ENCODE measurements at regions of chr22 and their contacts with region 1.

Region 1: DNA sequence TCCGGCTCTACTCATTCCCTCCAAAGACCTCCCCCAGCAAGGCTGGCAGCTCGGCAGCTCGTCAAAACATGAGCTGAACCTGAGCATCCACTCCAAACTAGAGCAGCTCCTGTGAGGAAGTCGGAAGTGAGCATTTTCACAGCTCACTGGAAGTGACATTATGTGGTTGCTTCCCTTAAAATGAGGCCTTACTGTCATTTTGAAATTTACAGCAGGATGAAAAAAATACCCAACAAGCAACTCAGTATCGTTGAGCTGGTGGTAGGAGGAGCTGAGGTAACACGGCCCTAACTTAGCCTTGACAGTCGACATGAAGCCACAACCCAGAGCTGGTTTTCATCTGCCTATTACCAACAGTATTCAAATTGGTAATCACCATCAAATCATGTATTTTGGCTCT is 38.0 kb upstream of the ARFGAP3 start:
- DNase-seq: peak; percentile 73
- H3K4me3 Mint-ChIP-seq: peak overlapping the region; percentile 16
- H3K27ac Mint-ChIP-seq: peak overlapping the region; percentile 78
- H3K4me1 Mint-ChIP-seq: peaks cover 34% of the 10 kb centered on the region
- H3K27me3 Mint-ChIP-seq: no peaks in the 10 kb centered on the region

Region 2: GRCh38 chr22:42399315-42400271 is 495.5 kb before region 1 on chr22:
- intact Hi-C with region 1: no loop called
- DNase-seq: no peak
- H3K4me3 Mint-ChIP-seq: no peak overlapping the region
- H3K27ac Mint-ChIP-seq: no peak overlapping the region
- H3K4me1 Mint-ChIP-seq: peaks cover 4% of the 10 kb centered on the region
- H3K27me3 Mint-ChIP-seq: no peaks in the 10 kb centered on the region

Region 3: DNA sequence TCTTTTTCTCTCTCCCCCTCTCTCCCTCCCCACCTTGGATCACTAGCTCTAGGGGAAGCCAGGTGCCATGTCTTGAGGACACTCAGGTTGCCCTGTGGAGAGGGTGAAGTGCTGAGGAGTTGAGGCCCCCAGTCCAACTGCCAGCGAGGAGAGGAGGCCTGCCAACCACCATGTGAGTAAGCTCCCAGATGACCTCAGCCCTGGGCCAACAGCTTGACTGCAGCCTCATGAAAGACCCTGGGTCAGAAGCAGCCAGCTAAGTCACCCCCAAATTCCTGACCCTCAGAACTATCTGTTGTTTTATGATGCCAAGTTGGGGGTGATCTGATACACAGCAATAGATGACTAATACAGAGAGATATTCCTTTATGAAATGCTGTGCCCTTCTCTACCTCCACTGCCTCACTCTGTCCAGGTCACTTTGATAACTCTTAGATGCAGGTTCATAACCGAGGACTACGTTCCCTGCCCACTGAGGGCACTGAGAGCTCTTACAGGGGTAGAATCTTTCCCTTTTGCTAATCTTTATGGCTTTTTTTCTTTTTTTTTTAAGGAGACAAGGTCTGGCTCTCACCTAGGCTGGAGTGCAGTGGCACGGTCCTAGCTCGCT is 46.0 kb before region 1 on chr22:
- intact Hi-C with region 1: no loop called
- DNase-seq: no peak
- H3K4me3 Mint-ChIP-seq: no peak overlapping the region
- H3K27ac Mint-ChIP-seq: no peak overlapping the region
- H3K4me1 Mint-ChIP-seq: peaks cover 6% of the 10 kb centered on the region
- H3K27me3 Mint-ChIP-seq: no peaks in the 10 kb centered on the region

Region 4: GRCh38 chr22:42863349-42863961 is 31.6 kb before region 1 on chr22:
- intact Hi-C with region 1: loop called (anchors 1 kb)
- DNase-seq: peak; percentile 62
- H3K4me3 Mint-ChIP-seq: peak overlapping the region; percentile 13
- H3K27ac Mint-ChIP-seq: peak overlapping the region; percentile 91
- H3K4me1 Mint-ChIP-seq: peaks cover 12% of the 10 kb centered on the region
- H3K27me3 Mint-ChIP-seq: peaks cover 5% of the 10 kb centered on the region

Region 5: DNA sequence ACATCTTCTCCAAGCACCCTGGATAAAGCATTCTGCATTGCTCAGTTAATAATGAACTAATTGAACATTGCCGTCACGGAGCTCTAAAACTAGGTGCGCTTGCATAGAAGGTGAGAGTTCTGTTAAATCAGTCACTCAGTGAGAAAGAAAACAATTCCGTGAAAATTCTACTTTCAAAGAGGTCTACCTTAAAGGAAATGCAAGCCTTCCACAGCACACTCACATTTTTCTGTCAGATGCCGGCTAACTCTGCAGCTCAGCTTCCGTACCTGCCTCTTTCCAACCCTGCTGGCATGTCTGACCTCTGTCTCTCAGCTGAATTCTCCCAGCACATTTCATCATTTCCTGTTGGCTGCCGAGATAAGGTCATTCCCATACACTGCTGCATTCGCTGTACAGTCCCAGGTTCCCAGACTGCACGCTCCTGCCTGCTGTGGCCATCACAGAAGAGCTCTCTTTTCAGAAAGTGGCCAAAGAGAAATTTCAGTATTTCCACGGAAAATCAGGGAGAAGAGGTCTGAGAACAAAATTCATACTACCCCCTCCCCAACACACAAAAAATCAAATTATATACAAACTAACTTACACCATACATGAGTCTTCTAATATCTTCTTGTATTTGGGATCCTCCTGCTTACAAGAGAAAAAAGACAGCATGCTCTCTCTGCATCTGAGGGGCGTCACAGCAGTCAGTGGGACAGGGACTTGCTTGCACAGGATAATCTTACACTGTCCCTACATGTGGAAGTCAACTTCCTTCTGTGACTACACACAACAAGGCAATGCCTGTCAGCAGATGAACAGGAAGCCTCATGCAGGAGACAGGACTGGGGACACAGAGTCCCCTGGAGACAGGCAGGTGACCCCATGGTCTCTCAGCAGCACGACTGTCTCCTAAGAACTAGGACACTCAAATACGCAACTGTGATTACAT is 64.8 kb after region 1 on chr22:
- intact Hi-C with region 1: loop called (anchors 10 kb)
- DNase-seq: peak; percentile 63
- H3K4me3 Mint-ChIP-seq: peak overlapping the region; percentile 44
- H3K27ac Mint-ChIP-seq: no peak overlapping the region
- H3K4me1 Mint-ChIP-seq: peaks cover 44% of the 10 kb centered on the region
- H3K27me3 Mint-ChIP-seq: no peaks in the 10 kb centered on the region

Measured in activated CD4-positive, alpha-beta T cell treated with anti-CD3 and anti-CD28 coated beads, Interleukin-2, amount 10 ng/mL, durations not matched to agents 24 days and 14 days (primary cell).